ENCODE measurements at regions of chrX and their contacts with region 1.

Region 1: GRCh38 chrX:1649621-1650020 is 34.8 kb downstream of the ASMT start:
- DNase-seq: no peak
- ATAC-seq: no peak
- H3K4me3 ChIP-seq: no peak overlapping the region
- H3K27ac ChIP-seq: no peak overlapping the region
- H3K4me1 ChIP-seq: no peaks in the 10 kb centered on the region
- H3K27me3 ChIP-seq: no peaks in the 10 kb centered on the region
- CTCF ChIP-seq: no peak
- EP300 ChIP-seq: no peak
- POLR2A ChIP-seq: no peak
- RAD21 ChIP-seq: no peak

Region 2: DNA sequence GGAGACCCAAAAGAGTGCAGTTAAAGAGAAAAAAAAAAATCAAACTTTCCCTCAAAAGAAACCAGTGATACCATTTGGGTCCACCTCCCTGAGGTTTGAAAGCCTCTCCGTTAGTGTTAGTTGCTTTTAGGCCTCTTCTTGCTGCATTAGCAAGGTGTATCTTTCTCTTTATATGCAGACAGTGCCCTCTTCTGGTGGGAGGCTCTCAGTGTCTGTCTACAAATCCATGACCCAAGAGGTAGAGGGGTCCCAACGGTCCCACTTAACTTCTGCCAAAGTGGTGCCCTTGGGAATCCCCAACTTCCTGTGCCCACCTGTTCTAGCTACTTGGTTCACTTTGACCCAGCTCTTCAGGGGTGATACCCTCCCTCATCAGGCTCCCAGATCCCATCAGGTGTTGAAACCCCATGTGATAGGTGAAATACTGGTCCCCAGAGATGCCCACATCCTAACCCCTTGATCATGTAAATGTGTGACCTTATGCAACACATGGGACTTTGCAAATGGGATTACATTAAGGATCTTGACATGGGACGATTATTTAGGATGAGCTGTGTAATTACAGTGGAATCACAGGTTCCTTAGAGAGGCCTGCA is 977.7 kb after region 1 on chrX:
- CTCF ChIA-PET with region 1: no interaction called
- POLR2A ChIA-PET with region 1: no interaction called
- in situ Hi-C with region 1: loop called (anchors 25 kb)
- intact Hi-C with region 1: loop called (anchors 1 kb)
- DNase-seq: peak; percentile 13 to 63 (median 16)
- ATAC-seq: peak; percentile 86
- H3K4me3 ChIP-seq: no peak overlapping the region
- H3K27ac ChIP-seq: no peak overlapping the region
- H3K4me1 ChIP-seq: no peaks in the 10 kb centered on the region
- H3K27me3 ChIP-seq: no peaks in the 10 kb centered on the region
- CTCF ChIP-seq: peak; percentile 41 to 66 (median 59)
- EP300 ChIP-seq: no peak
- POLR2A ChIP-seq: no peak
- RAD21 ChIP-seq: peak; percentile 54 to 71